Colonic mucosa (tissue), 4 donors: ENCODE measurements at regions of chr9 and their contacts with region 1.

Region 1: GRCh38 chr9:20941174-20941690 is 90.2 kb downstream of the HACD4 start:
- DNase-seq: peak; percentile 57
- H3K4me3 ChIP-seq: no peak overlapping the region
- H3K27ac ChIP-seq: no peak overlapping the region
- H3K4me1 ChIP-seq: no peaks in the 10 kb centered on the region
- H3K27me3 ChIP-seq: no peaks in the 10 kb centered on the region
- CTCF ChIP-seq: peak; percentile 70

Region 2: DNA sequence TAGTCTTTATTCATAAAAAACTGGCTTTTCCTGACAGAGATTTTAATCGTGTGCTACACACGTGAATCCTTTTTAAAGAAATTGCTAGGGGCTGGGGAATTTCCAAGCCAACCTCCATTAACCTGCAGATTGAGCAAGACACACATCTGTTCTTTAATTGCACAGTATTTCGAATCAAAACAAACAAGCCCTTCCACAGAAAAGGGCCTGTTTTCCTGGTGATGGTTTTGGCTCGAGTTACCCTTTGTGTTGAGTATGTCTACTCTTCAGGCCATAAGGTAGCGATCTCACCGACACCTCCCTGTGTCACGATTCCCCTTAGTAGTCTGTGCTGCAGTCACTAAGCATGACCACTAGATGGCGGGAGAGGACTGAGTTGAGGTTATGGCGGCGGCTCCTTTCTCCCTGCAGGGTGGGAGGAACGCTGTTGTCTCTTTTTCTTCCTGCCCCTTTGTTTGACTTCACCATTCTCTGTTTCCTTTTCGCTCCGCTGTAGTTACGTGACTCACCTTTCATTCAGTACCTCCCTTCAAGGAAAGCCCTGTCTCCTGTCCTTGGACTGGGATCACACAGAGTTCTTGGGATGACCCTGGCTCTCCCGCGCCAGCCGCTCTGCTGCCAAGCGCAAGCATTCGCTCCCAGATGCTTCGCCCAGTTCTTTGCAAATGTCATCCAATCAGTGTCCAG is 1015.3 kb before region 1 on chr9:
- intact Hi-C with region 1: loop called (anchors 5 kb)
- DNase-seq: peak; percentile 79
- H3K4me3 ChIP-seq: peak overlapping the region; percentile 14
- H3K27ac ChIP-seq: no peak overlapping the region
- H3K4me1 ChIP-seq: no peaks in the 10 kb centered on the region
- H3K27me3 ChIP-seq: no peaks in the 10 kb centered on the region
- CTCF ChIP-seq: peak; percentile 90

Region 3: DNA sequence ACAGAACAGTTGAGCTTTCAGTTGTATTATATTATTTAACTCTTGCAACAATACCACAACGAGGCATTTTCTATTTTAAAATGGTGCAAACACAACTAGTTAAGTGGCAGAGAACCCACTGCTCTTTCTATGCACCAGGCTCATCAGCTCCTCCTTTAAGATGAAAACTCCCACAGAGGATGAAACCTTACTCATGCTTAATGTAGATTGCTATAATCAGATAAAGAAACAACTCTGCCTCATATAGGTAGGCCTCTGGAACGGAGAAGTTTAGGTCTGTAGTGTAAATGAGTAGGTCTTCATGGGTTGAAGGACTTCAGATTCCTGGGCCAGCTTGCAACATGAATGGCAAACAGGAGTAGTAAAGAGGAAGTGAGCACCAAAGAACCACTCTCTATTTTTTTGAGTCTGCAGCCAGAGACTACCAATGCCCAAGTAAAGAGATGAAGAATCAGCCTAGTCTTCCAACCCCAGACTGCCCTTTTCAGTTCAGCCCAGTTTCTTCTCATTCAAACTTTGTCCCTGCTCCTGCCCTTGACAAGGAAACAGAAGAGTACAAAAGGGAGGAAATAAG is 56.4 kb after region 1 on chr9:
- intact Hi-C with region 1: no loop called
- DNase-seq: no peak
- H3K4me3 ChIP-seq: no peak overlapping the region
- H3K27ac ChIP-seq: no peak overlapping the region
- H3K4me1 ChIP-seq: no peaks in the 10 kb centered on the region
- H3K27me3 ChIP-seq: no peaks in the 10 kb centered on the region
- CTCF ChIP-seq: no peak

Region 4: GRCh38 chr9:21326526-21327139 is 385.4 kb after region 1 on chr9:
- intact Hi-C with region 1: no loop called
- DNase-seq: no peak
- H3K4me3 ChIP-seq: no peak overlapping the region
- H3K27ac ChIP-seq: no peak overlapping the region
- H3K4me1 ChIP-seq: peaks cover 9% of the 10 kb centered on the region
- H3K27me3 ChIP-seq: no peaks in the 10 kb centered on the region
- CTCF ChIP-seq: peak; percentile 67